H1 (cell line): ENCODE measurements at regions of chr9 and their contacts with region 1.

Region 1: DNA sequence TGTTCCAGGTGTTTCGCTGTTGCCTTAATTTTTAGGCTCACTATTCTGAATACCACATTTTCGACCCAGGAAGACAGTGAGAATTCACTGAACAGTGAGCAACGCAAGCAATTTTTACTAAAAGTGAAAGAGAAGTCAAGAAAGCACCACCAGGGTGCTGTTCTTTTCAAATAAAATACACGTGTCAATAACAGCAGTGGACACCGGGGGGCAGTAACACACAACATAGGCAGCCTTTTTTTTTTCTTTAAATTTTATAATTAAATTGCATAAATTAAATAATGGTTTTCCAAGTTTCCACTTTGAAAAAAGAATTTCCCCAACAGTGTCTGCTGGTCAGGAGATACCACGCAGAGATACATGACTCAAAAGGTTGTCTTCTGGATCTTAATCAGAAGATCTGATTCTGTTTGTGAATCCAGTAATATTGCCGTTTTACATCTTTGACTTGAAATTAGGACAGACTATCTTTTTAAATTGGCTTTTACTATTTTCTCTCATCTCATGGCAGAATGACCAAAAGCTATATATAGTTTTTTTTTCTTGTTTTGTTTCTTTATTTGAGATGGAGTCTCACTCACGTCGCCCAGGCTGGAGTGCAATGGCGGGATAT is 47.1 kb upstream of the SH3GL2 start:
- DNase-seq: peak in 1 of 2 experiments; percentile 73
- H3K4me3 ChIP-seq: no peak overlapping the region
- H3K27ac ChIP-seq: no peak overlapping the region
- H3K4me1 ChIP-seq: no peaks in the 10 kb centered on the region; a peak in 1 of 7 replicates
- H3K27me3 ChIP-seq: no peaks in the 10 kb centered on the region
- CTCF ChIP-seq: peak in 2 of 3 experiments; percentile 53 to 92; a peak in 3 of 4 replicates
- EP300 ChIP-seq: no peak
- POLR2A ChIP-seq: no peak
- RAD21 ChIP-seq: peak; percentile 80 to 83

Region 2: GRCh38 chr9:17519761-17520160 is 12.0 kb before region 1 on chr9:
- CTCF ChIA-PET with region 1: interaction called, 20 read pairs
- POLR2A ChIA-PET with region 1: interaction called, 3 read pairs
- DNase-seq: no peak
- H3K4me3 ChIP-seq: no peak overlapping the region
- H3K27ac ChIP-seq: no peak overlapping the region
- H3K4me1 ChIP-seq: no peaks in the 10 kb centered on the region; a peak in 1 of 7 replicates
- H3K27me3 ChIP-seq: no peaks in the 10 kb centered on the region
- CTCF ChIP-seq: no peak
- EP300 ChIP-seq: no peak
- POLR2A ChIP-seq: no peak
- RAD21 ChIP-seq: no peak

Region 3: DNA sequence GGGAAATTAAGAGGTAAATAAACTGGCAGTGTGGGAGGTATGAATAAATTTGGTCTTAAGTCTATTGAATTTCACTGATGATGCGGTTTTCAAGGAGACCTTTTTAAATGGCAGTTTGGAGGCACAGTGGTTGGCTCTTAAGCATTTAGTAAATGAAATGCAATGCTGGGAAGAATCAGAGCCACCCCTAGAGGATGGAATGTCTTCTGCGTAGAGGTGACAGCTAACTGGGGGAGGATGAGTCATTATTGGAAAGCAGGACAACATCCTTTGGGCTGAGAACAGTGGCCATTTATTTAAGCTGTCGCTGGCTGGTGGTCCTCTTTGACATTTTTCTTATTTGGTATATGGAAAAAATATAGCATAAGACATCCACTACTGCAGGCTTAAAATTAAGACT is 210.3 kb after region 1 on chr9:
- CTCF ChIA-PET with region 1: interaction called, 20 read pairs
- POLR2A ChIA-PET with region 1: no interaction called
- DNase-seq: peak in 1 of 2 experiments; percentile 47
- H3K4me3 ChIP-seq: no peak overlapping the region
- H3K27ac ChIP-seq: no peak overlapping the region
- H3K4me1 ChIP-seq: peaks cover 0 to 2% (median 0%) of the 10 kb centered on the region in 4 experiments; a peak in 3 of 7 replicates
- H3K27me3 ChIP-seq: no peaks in the 10 kb centered on the region
- CTCF ChIP-seq: peak; percentile 7 to 79 (median 54)
- EP300 ChIP-seq: 0 out of 3 replicates have a peak, but pooled peaks of 1 of the 2 experiments have one; percentile 40
- POLR2A ChIP-seq: no peak
- RAD21 ChIP-seq: peak; percentile 64 to 71

Region 4: GRCh38 chr9:17783227-17783626 is 251.5 kb after region 1 on chr9:
- CTCF ChIA-PET with region 1: interaction called, 10 read pairs
- POLR2A ChIA-PET with region 1: no interaction called
- DNase-seq: no peak
- H3K4me3 ChIP-seq: no peak overlapping the region
- H3K27ac ChIP-seq: no peak overlapping the region
- H3K4me1 ChIP-seq: no peaks in the 10 kb centered on the region
- H3K27me3 ChIP-seq: no peaks in the 10 kb centered on the region
- CTCF ChIP-seq: no peak
- EP300 ChIP-seq: no peak
- POLR2A ChIP-seq: no peak
- RAD21 ChIP-seq: no peak

Region 5: GRCh38 chr9:17793713-17794622 is 262.2 kb after region 1 on chr9:
- CTCF ChIA-PET with region 1: interaction called, 10 read pairs
- POLR2A ChIA-PET with region 1: no interaction called
- DNase-seq: no peak
- H3K4me3 ChIP-seq: no peak overlapping the region
- H3K27ac ChIP-seq: no peak overlapping the region
- H3K4me1 ChIP-seq: no peaks in the 10 kb centered on the region
- H3K27me3 ChIP-seq: no peaks in the 10 kb centered on the region
- CTCF ChIP-seq: peak in 1 of 3 experiments; percentile 24; a peak in 2 of 4 replicates
- EP300 ChIP-seq: no peak
- POLR2A ChIP-seq: no peak
- RAD21 ChIP-seq: peak in 1 of 2 experiments; percentile 16; a peak in 3 of 4 replicates

Region 6: GRCh38 chr9:17802249-17802857 is 270.6 kb after region 1 on chr9:
- CTCF ChIA-PET with region 1: interaction called, 95 read pairs
- POLR2A ChIA-PET with region 1: no interaction called
- DNase-seq: no peak
- H3K4me3 ChIP-seq: no peak overlapping the region
- H3K27ac ChIP-seq: no peak overlapping the region
- H3K4me1 ChIP-seq: no peaks in the 10 kb centered on the region
- H3K27me3 ChIP-seq: no peaks in the 10 kb centered on the region
- CTCF ChIP-seq: peak in 2 of 3 experiments; percentile 50 to 57; a peak in 2 of 4 replicates
- EP300 ChIP-seq: no peak
- POLR2A ChIP-seq: no peak
- RAD21 ChIP-seq: peak; percentile 62 to 67

Region 7: DNA sequence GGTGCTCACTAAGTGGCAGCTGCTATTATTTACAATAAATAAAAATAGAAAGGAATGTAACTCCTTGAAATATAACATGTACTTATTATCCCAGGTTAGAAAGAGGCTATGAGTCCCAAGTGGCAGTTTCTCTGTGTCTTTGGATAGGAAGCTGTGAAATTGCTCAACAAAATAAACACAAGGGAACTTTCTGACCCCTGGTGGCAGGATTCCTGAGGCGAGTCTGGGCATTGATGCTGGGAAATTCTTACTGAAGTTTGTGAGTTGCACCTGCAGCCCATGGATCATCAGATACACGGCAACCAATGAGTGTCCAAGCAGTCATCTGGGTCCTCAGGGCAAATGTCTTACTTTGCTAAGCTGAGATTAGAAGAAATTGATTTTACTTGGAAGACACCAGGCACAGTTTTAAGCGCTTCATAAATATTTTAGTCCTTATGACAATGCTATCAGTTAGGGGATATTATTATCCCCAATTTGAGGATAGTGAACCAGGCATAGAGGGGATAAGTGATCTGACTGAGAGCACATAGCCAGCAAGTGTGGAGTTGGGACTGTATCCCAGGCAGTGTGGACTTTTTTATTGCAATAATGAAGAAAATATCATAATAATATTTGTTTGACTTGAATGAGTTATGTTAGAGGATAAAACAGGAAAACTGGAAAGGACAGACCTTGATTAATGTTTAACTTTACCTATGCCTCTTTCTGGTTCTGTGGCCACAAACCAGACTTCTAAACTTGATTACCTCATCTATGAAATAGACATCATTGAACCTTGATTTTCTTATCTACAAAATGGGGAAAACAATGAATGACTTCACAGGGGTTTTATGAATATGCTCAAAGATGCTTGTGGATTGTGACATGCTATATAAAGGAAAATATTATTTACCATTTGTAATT is 676.7 kb after region 1 on chr9:
- CTCF ChIA-PET with region 1: interaction called, 18 read pairs
- POLR2A ChIA-PET with region 1: no interaction called
- DNase-seq: peak; percentile 46 to 67
- H3K4me3 ChIP-seq: no peak overlapping the region
- H3K27ac ChIP-seq: no peak overlapping the region
- H3K4me1 ChIP-seq: peaks cover 0 to 4% (median 0%) of the 10 kb centered on the region in 4 experiments; a peak in 1 of 7 replicates
- H3K27me3 ChIP-seq: no peaks in the 10 kb centered on the region
- CTCF ChIP-seq: peak; percentile 47 to 79 (median 76)
- EP300 ChIP-seq: no peak
- POLR2A ChIP-seq: no peak
- RAD21 ChIP-seq: peak; percentile 79 to 83